ENCODE measurements at regions of chr16 and their contacts with region 1.

Region 1: DNA sequence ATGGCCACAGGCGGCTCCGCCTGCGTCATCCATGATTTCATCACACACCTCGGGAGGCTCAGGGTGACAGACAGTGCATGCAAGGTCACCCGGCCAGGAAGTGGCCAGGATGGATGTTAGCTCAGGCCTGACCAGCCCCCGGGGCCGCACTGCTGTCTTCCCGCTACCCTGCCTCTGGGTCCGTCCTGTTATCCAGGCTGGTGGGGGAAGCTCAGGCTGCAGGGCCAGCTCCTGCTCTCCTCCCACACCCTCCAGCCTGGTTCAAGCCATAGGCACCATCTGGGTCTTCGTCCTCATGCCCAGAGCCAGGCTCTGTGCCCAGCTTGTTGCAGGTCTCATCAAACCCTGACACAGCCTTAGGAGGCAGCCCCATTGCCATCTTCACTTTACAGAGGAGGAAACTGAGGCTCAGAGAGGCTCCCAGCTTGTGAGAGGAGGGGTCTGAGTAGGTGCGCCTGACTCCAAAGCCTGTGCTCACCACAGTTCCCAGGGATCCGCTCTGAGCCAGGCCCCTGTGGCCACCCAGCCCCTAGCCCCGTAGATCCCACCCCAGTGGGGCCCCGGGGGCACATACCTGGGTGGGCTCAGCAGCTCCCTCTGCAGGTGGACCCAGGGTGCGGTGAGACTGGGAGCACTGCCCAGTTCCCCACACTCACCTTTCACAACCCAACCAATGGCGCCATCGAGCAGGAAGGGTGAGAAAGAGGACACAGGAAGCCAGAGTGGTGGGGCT is 414 bp upstream of the ADGRG3 start:
- DNase-seq: no peak
- ATAC-seq: peak; percentile 39 to 49

Region 2: GRCh38 chr16:57711346-57712026 is 43.8 kb after region 1 on chr16:
- intact Hi-C with region 1: loop called in 1 of 2 experiments (anchors 10 kb)
- DNase-seq: no peak
- ATAC-seq: no peak

Measured in left cardiac atrium (tissue), 4 donors.